T-cell (primary cell): ENCODE measurements at regions of chr2 and their contacts with region 1.

Region 1: GRCh38 chr2:113173542-113174395 is at the start of gene PSD4:
- DNase-seq: peak; percentile 75 to 93 (median 88)
- ATAC-seq: peak; percentile 82 to 91 (median 86)
- H3K4me3 ChIP-seq: peak within 1 kb of the TSS; percentile 90 to 93
- H3K4me3 Mint-ChIP-seq: peak within 1 kb of the TSS; percentile 85 to 86 (median 86)
- H3K27ac ChIP-seq: peak within 1 kb of the TSS; percentile 78
- H3K27ac Mint-ChIP-seq: peak within 1 kb of the TSS; percentile 90 to 96
- H3K4me1 ChIP-seq: peaks cover 54 to 95% of the 10 kb centered on the region in 2 experiments
- H3K4me1 Mint-ChIP-seq: peaks cover 82 to 84% (median 83%) of the 10 kb centered on the region in 3 donors
- H3K27me3 ChIP-seq: no peaks in the 10 kb centered on the region
- H3K27me3 Mint-ChIP-seq: peaks cover 0 to 2% of the 10 kb centered on the region in 2 donors
- total RNA-seq, gene PSD4: 145 to 217 (median 150) TPM

Region 2: DNA sequence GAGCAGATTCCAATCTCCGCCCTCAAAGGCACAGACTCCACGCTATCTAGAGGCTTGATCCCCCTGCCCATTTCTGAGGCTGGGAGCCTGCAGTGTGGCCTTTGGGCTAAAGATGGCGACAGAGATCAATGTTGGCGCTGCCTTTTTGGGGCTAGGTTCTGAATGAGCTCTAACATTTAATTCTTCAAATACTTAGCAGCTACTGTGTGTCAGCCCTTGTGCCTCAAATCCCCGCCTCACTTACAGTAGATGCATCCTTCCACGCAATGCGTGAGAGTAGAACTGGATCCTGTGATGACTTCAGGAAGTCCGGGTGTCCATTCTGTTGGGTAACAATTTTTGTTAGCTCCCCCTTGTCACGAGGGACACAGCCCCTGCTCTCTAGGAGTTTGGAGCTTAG is 93.6 kb before region 1 on chr2:
- CTCF ChIA-PET with region 1: no interaction called
- POLR2A ChIA-PET with region 1: no interaction called
- DNase-seq: peak in 27 of 35 experiments; percentile 5 to 56 (median 29)
- ATAC-seq: peak; percentile 60 to 73 (median 68)
- H3K4me3 ChIP-seq: no peak overlapping the region
- H3K4me3 Mint-ChIP-seq: no peak overlapping the region
- H3K27ac ChIP-seq: no peak overlapping the region
- H3K27ac Mint-ChIP-seq: no peak overlapping the region
- H3K4me1 ChIP-seq: peaks cover 0 to 5% of the 10 kb centered on the region in 2 experiments
- H3K4me1 Mint-ChIP-seq: peaks cover 3 to 5% (median 4%) of the 10 kb centered on the region in 3 donors
- H3K27me3 ChIP-seq: peaks cover 0 to 3% of the 10 kb centered on the region in 2 experiments
- H3K27me3 Mint-ChIP-seq: peaks cover 3 to 5% of the 10 kb centered on the region in 2 donors

Region 3: DNA sequence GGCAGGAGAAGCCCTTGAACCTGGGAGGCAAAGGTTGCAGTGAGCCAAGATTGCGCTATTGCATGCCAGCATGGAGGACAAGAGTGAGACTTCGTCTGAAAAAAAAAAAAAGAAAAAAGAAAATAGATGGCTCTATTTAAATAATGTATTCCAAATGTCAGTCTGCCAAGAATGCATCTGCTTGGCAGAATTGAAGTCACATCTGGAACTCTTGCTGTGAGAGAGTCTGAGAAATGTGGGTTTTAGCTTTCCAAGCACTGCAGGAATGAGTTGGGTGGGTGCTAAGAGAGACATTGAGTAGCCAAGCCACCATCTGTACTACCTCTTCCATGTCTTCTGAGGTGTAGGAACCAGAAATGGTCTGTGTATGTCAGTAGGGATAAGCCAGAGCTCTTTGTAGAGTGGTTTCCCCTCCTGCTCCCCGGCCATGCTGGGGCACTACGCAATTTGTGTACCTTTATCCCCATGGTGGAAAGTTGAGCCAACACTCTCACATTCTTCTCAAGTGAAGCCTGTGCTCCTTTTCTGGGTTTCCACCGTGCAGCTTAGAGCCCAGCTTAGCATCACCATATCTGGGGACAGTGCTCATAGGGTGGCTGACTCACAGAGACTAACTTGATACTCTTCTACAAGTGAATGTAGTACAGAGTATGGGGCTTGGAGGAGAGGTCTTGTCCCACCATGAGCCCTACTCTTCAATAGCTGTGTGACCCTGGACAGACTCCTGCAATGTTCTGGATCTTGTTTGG is 80.7 kb before region 1 on chr2:
- CTCF ChIA-PET with region 1: no interaction called
- POLR2A ChIA-PET with region 1: no interaction called
- DNase-seq: no peak
- ATAC-seq: no peak
- H3K4me3 ChIP-seq: no peak overlapping the region
- H3K4me3 Mint-ChIP-seq: no peak overlapping the region
- H3K27ac ChIP-seq: no peak overlapping the region
- H3K27ac Mint-ChIP-seq: no peak overlapping the region
- H3K4me1 ChIP-seq: peaks cover 0 to under 1% of the 10 kb centered on the region in 2 experiments
- H3K4me1 Mint-ChIP-seq: peaks cover 6 to 7% (median 6%) of the 10 kb centered on the region in 3 donors
- H3K27me3 ChIP-seq: peaks cover 0 to 3% of the 10 kb centered on the region in 2 experiments
- H3K27me3 Mint-ChIP-seq: peaks cover 0 to 6% of the 10 kb centered on the region in 2 donors

Region 4: GRCh38 chr2:113198790-113199612 is 25.2 kb after region 1 on chr2:
- CTCF ChIA-PET with region 1: interaction called, 7 to 30 read pairs
- POLR2A ChIA-PET with region 1: no interaction called
- DNase-seq: peak; percentile 15 to 81 (median 66)
- ATAC-seq: peak; percentile 70 to 86 (median 80)
- H3K4me3 ChIP-seq: no peak overlapping the region
- H3K4me3 Mint-ChIP-seq: peak overlapping the region in 1 of 3 donors; percentile 28
- H3K27ac ChIP-seq: no peak overlapping the region
- H3K27ac Mint-ChIP-seq: peak overlapping the region in 1 of 2 donors; percentile 59
- H3K4me1 ChIP-seq: peaks cover 0 to 20% of the 10 kb centered on the region in 2 experiments
- H3K4me1 Mint-ChIP-seq: peaks cover 7 to 39% (median 24%) of the 10 kb centered on the region in 3 donors
- H3K27me3 ChIP-seq: no peaks in the 10 kb centered on the region
- H3K27me3 Mint-ChIP-seq: no peaks in the 10 kb centered on the region

Region 5: DNA sequence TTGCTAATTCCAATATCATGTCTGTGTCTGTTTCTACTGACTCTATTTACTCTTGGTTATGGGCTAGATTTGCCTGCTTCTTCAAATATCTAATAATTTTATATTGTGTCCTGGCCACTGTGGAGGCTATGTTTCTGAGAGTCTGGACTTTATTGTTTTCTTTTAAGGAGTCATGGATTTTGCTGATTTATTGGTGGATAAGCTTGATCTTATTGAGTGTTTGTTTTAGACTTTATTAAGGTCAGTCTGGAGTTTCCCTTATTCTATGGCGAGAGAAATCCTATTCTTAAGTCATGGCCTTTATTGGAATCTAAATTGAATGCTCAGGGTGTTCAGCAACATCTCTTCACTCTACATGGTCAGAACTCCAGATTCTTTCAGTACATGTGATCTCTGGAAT is 208.7 kb after region 1 on chr2:
- CTCF ChIA-PET with region 1: no interaction called
- POLR2A ChIA-PET with region 1: no interaction called
- DNase-seq: no peak
- ATAC-seq: no peak
- H3K4me3 ChIP-seq: no peak overlapping the region
- H3K4me3 Mint-ChIP-seq: no peak overlapping the region
- H3K27ac ChIP-seq: no peak overlapping the region
- H3K27ac Mint-ChIP-seq: no peak overlapping the region
- H3K4me1 ChIP-seq: no peaks in the 10 kb centered on the region
- H3K4me1 Mint-ChIP-seq: no peaks in the 10 kb centered on the region
- H3K27me3 ChIP-seq: peaks cover 0 to 5% of the 10 kb centered on the region in 2 experiments
- H3K27me3 Mint-ChIP-seq: peaks cover 12 to 16% of the 10 kb centered on the region in 2 donors